ENCODE measurements at regions of chr5 and their contacts with region 1.

Region 1: DNA sequence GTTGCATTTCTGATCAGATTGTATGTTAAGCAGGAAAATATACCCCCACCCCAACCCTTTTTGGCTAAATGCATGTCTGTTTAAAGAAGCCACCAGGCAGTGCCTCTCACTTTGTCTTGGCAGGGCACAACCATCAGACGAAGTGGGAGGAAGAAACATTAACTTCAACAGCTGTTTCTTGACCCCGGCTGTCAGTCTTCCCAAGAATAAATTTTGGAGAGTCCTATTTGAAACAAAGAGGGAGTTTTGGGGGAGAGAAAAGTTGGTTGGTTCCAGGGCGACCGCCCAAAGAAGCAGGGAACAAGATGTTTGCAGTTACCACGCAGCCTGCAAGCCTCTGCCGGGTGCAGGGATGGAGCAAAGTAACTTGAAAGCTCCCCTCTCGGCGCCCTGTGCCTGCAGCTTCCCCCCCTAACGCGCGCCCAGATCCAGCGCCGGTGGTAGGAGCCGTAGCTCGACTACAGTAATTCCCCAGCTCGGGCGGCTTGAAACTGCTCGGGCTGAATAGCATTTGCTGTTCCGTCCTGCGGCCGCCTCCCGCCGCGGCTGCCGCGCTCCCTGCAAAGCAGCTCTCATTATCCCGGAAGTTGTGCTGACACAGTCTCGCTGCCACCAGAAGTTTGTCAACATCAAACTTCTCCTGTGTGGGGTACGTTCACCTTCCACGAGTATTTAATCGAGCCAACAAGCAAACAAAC is 100.7 kb upstream of the SSBP2 start:
- DNase-seq: peak; percentile 96 to 99 (median 98)
- H3K4me3 ChIP-seq: peak overlapping the region; percentile 53
- H3K27ac ChIP-seq: peak overlapping the region; percentile 42 to 80
- H3K4me1 ChIP-seq: peaks cover 8% of the 10 kb centered on the region
- H3K27me3 ChIP-seq: no peaks in the 10 kb centered on the region
- CTCF ChIP-seq: peak in 1 of 3 donors; percentile 21
- EP300 ChIP-seq: no peak
- POLR2A ChIP-seq: no peak

Region 2: DNA sequence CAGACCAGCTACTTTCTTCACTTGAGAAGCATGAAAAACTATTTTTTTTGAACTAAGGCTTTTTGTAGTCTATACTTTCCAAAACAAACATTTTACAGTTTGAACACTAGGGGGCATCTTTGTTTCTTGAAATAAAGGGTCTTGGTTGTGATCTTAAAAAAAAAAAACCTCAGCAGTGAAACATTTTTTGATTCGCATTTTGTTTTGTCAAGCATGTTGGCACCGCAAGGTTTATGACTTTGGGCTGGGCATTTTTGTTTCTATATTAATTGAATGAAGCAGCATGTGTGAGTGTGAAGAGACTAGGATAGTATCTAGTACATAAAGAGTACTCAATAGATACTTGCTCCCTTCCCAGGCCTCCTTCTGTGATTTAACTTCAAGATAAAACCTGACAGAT is 426.1 kb before region 1 on chr5:
- intact Hi-C with region 1: loop called in 2 of 4 experiments (anchors 10 kb)
- DNase-seq: no peak
- H3K4me3 ChIP-seq: no peak overlapping the region
- H3K27ac ChIP-seq: no peak overlapping the region
- H3K4me1 ChIP-seq: peaks cover 3% of the 10 kb centered on the region
- H3K27me3 ChIP-seq: no peaks in the 10 kb centered on the region
- CTCF ChIP-seq: peak; percentile 40 to 60 (median 45)
- EP300 ChIP-seq: no peak
- POLR2A ChIP-seq: no peak

Region 3: GRCh38 chr5:81506900-81507588 is 344.6 kb before region 1 on chr5:
- intact Hi-C with region 1: loop called in 2 of 4 experiments (anchors 5 to 10 kb)
- DNase-seq: peak in 4 of 5 donors; percentile 36 to 74 (median 48)
- H3K4me3 ChIP-seq: no peak overlapping the region
- H3K27ac ChIP-seq: peak overlapping the region in 1 of 2 donors; percentile 77
- H3K4me1 ChIP-seq: no peaks in the 10 kb centered on the region
- H3K27me3 ChIP-seq: no peaks in the 10 kb centered on the region
- CTCF ChIP-seq: peak; percentile 61 to 91 (median 87)
- EP300 ChIP-seq: no peak
- POLR2A ChIP-seq: no peak

Region 4: DNA sequence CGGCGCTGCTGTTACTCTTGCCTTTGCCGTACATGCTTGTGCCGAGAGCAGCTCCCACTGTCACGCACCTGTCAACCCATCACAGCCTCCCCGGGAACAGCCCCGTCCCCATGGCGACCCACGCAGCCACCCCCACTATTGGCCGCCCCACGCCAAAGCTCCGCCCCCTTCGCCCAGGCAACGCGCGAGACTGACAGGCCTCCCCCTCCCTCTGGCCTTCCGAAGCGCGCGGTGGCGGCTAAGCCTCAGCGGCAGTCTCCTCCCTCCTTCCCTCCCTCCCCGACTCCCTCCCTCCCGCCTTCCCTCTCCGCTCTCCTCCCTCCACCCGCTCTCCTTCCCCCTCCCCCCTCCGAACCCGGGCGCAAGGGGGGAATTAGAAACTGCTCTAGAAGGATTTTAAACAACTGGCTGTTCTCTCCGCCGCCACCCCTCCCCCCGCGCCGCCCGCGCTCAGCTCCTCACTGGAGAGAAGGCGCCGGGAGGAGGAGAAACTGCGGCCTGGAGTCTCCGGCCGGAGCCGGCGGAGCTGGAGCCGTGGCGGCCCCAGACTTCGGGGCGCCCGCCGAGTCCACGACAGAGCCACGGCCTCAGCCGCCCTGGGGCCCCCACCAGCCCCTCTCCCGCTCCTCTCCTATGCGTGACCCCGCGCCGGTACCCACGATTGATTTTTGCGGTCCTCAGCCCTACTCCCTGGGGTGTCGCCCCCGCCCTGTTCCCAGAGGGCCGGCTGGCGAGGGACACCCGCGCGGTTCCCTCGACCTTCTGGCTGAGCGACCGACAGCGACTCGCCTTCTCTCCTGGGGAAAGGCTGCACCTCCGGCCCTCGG is 100.4 kb before region 1 on chr5 and contains the start of gene SSBP2:
- intact Hi-C with region 1: loop called (anchors 1 to 2 kb)
- DNase-seq: peak; percentile 99 to 100 (median 100)
- H3K4me3 ChIP-seq: peak within 1 kb of the TSS; percentile 93
- H3K27ac ChIP-seq: peak within 1 kb of the TSS; percentile 94 to 96
- H3K4me1 ChIP-seq: peaks cover 1% of the 10 kb centered on the region
- H3K27me3 ChIP-seq: no peaks in the 10 kb centered on the region
- CTCF ChIP-seq: peak in 2 of 3 donors; percentile 19 to 24
- EP300 ChIP-seq: no peak
- POLR2A ChIP-seq: peak; percentile 82
- total RNA-seq, gene SSBP2: 42.0 to 126 (median 78.2) TPM

Region 5: DNA sequence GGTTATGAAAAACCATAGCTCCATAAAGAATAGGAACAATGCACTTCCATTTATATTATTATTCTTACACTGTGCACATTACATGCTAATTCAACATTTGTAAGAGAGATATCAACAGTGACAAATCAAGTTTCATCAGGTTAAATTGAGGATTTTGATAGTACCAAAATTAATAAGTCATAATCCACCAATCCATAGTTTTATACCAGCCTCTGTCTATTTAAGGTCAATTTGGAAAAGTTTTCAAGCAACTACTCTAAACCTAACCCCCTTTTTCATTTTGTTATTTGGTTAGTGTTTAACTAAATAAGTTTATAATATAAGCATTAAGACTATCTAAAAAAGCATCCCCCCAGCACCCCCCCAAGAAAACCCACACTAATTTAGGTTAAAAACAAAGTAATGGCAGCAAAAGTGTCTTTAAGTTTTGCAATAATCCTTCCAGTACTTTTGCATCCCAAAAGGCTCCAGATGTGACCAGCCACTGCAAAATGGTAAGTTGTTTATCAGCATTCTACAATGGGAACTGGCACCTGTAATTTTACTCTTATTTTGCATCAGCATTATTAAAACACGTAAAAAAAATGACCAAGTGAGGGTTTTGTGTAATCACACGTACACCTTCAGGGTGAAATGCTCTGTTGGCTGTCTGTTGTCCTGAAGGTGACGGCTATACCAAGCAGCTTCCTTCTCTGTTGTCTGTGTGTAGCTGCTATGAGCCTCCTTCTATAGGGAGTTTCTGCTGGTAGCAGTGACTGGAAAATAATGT is 64.0 kb before region 1 on chr5:
- intact Hi-C with region 1: loop called (anchors 2 to 5 kb)
- DNase-seq: peak in 4 of 5 donors; percentile 45 to 85 (median 72)
- H3K4me3 ChIP-seq: no peak overlapping the region
- H3K27ac ChIP-seq: no peak overlapping the region
- H3K4me1 ChIP-seq: peaks cover 9% of the 10 kb centered on the region
- H3K27me3 ChIP-seq: no peaks in the 10 kb centered on the region
- CTCF ChIP-seq: no peak
- EP300 ChIP-seq: no peak
- POLR2A ChIP-seq: no peak

Region 6: DNA sequence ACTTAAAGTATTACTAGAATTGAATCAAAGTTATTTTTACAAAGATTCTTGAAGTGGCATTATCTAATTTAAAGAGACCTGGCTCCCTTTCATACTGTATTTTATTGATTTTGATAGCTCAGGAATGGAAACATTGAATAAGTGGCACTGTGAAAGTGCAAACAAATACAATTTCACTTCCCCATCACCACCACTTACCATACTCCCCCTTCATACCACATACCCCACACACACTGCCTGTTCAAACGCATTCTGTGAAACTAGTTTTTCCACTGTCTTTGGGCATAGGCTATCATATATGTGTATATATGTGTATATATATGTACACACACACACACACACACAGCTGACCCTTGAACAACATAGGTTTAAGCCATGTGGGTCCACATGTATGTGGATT is 58.0 kb after region 1 on chr5:
- intact Hi-C with region 1: no loop called
- DNase-seq: no peak
- H3K4me3 ChIP-seq: no peak overlapping the region
- H3K27ac ChIP-seq: no peak overlapping the region
- H3K4me1 ChIP-seq: peaks cover 3% of the 10 kb centered on the region
- H3K27me3 ChIP-seq: no peaks in the 10 kb centered on the region
- CTCF ChIP-seq: no peak
- EP300 ChIP-seq: no peak
- POLR2A ChIP-seq: no peak

Region 7: DNA sequence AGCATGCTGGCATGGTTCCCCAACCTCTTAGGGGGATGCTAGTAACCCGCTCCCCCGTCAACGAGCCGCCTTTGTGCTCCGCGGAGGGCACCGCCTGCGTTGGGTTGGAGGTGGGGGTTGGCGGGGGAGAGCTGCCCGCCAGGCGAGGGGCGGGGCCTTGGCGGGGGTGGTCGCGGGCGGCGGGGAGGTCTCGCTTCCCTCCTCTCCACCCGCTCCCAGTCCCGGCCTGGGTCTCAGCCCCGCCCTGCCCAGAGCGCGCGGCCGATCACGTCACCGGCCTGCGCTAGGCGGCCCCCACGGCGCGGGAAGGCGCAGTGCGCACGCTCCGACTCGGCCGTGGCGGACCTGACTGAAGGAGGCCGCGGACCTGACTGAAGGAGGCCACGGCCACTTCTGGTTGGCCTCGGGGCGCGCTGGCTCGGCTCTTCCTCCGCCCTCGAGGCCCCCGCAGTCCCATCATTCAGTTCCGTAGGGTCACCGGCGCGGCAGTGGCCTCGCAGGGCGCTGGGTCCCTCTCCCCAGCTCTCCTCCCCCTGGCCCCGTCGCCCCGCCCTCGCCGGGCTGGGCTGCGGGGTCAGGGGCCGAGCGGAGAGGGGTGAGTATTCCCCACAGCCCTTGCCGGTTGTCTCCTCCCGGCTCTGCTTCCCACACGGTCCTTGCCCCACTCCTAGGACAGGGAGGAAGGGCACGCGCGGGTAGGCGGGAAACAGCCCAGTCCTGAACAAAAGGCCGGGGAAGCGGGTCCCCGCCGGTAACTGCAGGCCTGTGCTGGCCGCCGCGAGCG is 120.3 kb after region 1 on chr5 and contains the start of gene ATG10:
- intact Hi-C with region 1: loop called in 3 of 4 experiments (anchors 5 to 10 kb)
- DNase-seq: peak; percentile 93 to 96 (median 96)
- H3K4me3 ChIP-seq: peak within 1 kb of the TSS; percentile 67
- H3K27ac ChIP-seq: peak within 1 kb of the TSS; percentile 97 to 100
- H3K4me1 ChIP-seq: no peaks in the 10 kb centered on the region
- H3K27me3 ChIP-seq: no peaks in the 10 kb centered on the region
- CTCF ChIP-seq: peak in 1 of 3 donors; percentile 18
- EP300 ChIP-seq: no peak
- POLR2A ChIP-seq: peak; percentile 98
- total RNA-seq, gene ATG10: 2.6 to 6.1 (median 4.6) TPM

Region 8: GRCh38 chr5:82165740-82166530 is 314.3 kb after region 1 on chr5:
- intact Hi-C with region 1: loop called in 2 of 4 experiments (anchors 5 to 10 kb)
- DNase-seq: peak; percentile 67 to 83 (median 75)
- H3K4me3 ChIP-seq: no peak overlapping the region
- H3K27ac ChIP-seq: no peak overlapping the region
- H3K4me1 ChIP-seq: peaks cover 4% of the 10 kb centered on the region
- H3K27me3 ChIP-seq: no peaks in the 10 kb centered on the region
- CTCF ChIP-seq: peak; percentile 75 to 89 (median 84)
- EP300 ChIP-seq: no peak
- POLR2A ChIP-seq: no peak

Measured in ovary (tissue), 10 donors.